Gastrocnemius medialis (tissue), 4 donors: ENCODE measurements at regions of chr17 and their contacts with region 1.

Region 1: DNA sequence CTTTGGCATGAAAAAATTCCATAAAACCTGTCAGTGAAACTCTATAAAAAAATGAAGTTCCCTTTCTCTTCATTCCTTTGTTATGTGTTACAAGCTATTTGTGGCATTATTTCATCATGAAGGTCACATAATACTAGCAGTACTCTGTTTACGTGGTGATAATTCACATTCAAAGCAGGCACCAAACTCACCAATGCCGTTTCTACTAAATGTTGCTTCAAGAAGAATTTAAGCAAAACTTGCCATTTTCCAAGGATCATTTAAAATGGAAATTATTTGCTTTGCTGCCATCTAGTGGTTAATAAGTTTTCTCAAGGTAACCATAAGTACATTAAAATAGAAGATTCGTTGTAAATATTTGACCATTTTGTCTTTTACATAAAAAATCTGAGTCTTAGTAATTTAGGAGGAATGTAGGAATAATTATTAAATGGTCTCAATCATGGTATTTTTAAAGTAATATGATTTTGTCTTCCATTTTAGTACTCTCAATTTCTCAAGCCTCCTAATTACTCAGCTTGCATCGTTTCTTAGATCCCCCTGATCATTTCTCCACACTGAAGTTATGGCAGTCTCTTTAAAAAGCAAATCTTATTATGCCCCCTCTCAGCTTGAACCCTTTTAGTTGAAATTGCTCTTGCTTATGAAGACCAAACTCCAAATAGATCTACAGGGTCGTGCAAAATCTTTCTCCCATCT is 80.8 kb downstream of the OMG start:
- DNase-seq: no peak
- ATAC-seq: peak; percentile 36 to 79
- H3K4me3 ChIP-seq: no peak overlapping the region
- H3K27ac ChIP-seq: no peak overlapping the region
- H3K4me1 ChIP-seq: no peaks in the 10 kb centered on the region
- H3K27me3 ChIP-seq: no peaks in the 10 kb centered on the region
- CTCF ChIP-seq: peak; percentile 46 to 64 (median 50)
- POLR2A ChIP-seq: no peak

Region 2: DNA sequence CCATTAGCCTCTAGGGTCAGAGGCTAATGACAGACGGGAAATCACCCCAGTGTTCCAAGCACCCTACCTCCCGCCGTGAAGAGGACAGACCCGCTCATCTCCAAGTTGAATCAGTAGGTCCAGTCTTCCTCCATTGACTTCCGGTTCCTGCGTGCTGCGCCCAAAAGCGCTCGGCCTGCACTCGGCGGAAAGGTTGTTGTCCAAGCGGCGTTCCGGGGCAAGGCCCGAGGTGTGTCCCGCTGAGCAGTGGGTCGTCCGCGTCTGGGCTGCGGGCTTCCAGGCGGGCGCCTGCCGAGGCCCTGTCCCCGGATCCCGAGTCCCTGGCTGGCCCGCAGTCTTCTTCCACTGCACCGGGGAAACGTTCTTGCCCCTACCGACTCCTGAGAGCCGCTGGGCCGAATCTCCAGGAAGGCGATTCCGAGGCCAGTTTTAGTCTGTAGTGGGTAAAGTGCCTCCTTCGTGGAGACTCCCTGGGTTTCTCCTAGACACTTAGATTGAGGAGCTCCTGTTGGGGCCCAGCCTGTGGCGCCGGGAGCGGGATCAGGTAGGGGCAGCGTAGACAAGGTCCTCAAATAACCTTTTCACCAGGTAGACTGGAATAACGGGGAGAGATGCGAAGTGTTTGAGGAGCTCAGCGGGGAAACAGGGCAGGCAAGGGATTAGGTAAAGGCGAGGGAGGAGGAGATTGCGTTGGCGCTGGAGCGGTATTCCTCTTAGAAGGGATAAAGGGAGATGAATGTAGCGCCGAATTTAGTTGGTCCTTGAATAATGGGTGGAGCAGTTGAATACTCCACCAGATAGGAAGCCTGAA is 309.9 kb before region 1 on chr17 and contains the start of gene TEFM:
- in situ Hi-C with region 1: loop called in 1 of 4 experiments (anchors 25 kb)
- intact Hi-C with region 1: loop called (anchors 5 kb)
- DNase-seq: peak; percentile 65 to 81
- ATAC-seq: peak; percentile 97 to 98
- H3K4me3 ChIP-seq: peak within 1 kb of the TSS; percentile 75 to 94 (median 90)
- H3K27ac ChIP-seq: peak within 1 kb of the TSS; percentile 85 to 93 (median 89)
- H3K4me1 ChIP-seq: peaks cover 15 to 16% of the 10 kb centered on the region in 2 donors
- H3K27me3 ChIP-seq: no peaks in the 10 kb centered on the region
- CTCF ChIP-seq: no peak
- POLR2A ChIP-seq: peak in 1 of 2 donors; percentile 23
- total RNA-seq, gene TEFM: 5.2 to 18.5 (median 8.3) TPM

Region 3: GRCh38 chr17:31015639-31016038 is 200.6 kb before region 1 on chr17:
- in situ Hi-C with region 1: loop called (anchors 5 to 10 kb)
- intact Hi-C with region 1: loop called (anchors 2 kb)
- DNase-seq: no peak
- ATAC-seq: no peak
- H3K4me3 ChIP-seq: no peak overlapping the region
- H3K27ac ChIP-seq: no peak overlapping the region
- H3K4me1 ChIP-seq: no peaks in the 10 kb centered on the region
- H3K27me3 ChIP-seq: no peaks in the 10 kb centered on the region
- CTCF ChIP-seq: no peak
- POLR2A ChIP-seq: no peak

Region 4: DNA sequence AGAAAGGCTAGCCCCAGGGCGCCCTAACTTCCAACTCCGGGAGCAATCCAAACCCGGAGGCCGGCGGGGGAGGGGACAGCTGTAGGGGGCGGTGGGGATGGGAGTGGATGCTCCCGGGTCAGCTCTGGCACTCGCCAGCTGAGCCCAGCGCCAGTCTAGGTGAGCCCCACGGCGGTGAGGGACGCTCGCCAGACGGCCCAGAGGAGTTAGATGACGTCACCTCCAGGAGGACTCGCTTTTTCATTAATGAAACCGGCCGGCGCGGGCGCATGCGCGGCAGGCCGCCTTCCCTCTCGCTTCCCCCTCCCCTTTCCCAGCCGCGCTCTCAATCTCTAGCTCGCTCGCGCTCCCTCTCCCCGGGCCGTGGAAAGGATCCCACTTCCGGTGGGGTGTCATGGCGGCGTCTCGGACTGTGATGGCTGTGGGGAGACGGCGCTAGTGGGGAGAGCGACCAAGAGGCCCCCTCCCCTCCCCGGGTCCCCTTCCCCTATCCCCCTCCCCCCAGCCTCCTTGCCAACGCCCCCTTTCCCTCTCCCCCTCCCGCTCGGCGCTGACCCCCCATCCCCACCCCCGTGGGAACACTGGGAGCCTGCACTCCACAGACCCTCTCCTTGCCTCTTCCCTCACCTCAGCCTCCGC is 121.5 kb before region 1 on chr17 and contains the start of gene NF1:
- in situ Hi-C with region 1: no loop called
- intact Hi-C with region 1: loop called (anchors 5 kb)
- DNase-seq: peak; percentile 87 to 94
- ATAC-seq: peak; percentile 97 to 98
- H3K4me3 ChIP-seq: peak within 1 kb of the TSS; percentile 96 to 100 (median 96)
- H3K27ac ChIP-seq: peak within 1 kb of the TSS; percentile 90 to 98 (median 98)
- H3K4me1 ChIP-seq: peaks cover 7 to 9% of the 10 kb centered on the region in 2 donors
- H3K27me3 ChIP-seq: no peaks in the 10 kb centered on the region
- CTCF ChIP-seq: no peak
- POLR2A ChIP-seq: peak; percentile 53 to 61
- total RNA-seq, gene NF1: 23.6 to 47.3 (median 32.0) TPM